Activated T-helper 2 cell treated with anti-CD3 and anti-CD28 coated beads, Interferon-gamma antibody, Interleukin-2, Interleukin-4, amounts not matched to agents 10 μg/mL and 5 μg/mL and 100 μg/mL, durations not matched to agents 14 hours and 24 hours and 36 hours (primary cell): ENCODE measurements at regions of chr7 and their contacts with region 1.

Region 1: GRCh38 chr7:22726345-22727185 is 435 bp upstream of the IL6 start:
- DNase-seq: peak; percentile 56
- H3K4me3 Mint-ChIP-seq: peak overlapping the region; percentile 31
- H3K27ac Mint-ChIP-seq: no peak overlapping the region
- H3K4me1 Mint-ChIP-seq: peaks cover 33% of the 10 kb centered on the region
- H3K27me3 Mint-ChIP-seq: peaks cover 35% of the 10 kb centered on the region

Region 2: DNA sequence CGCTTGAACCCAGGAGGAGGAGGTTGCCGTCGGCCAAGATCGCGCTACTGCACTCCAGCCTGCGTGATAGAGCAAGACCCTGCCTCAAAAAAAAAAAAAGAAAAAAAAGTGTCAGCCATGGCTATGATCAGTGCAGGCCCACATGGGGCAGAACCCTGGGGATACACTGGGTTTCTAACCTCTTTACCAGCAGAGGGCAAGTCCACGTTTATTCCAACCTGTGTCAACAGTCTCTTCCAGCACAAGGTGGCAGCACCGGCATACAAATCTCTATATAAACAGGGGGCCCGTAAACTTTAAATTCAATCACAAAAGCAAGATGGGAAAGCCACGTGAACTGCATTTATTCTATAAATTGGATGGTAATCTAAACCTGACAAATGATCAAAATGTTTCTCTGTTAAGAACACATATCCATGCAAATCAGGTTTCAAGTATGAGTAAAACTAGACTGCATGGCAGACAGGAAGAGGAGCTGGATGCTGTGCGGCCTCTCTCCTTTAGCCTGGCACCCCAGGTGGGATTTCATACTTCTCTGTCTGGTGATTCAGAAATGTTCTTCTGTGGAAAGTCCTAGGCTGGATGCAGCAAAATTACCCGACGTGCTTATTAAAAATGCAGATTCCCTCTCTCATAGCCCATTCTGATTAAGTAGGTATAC is 166.6 kb before region 1 on chr7:
- intact Hi-C with region 1: loop called (anchors 1 kb)
- DNase-seq: peak; percentile 62
- H3K4me3 Mint-ChIP-seq: no peak overlapping the region
- H3K27ac Mint-ChIP-seq: no peak overlapping the region
- H3K4me1 Mint-ChIP-seq: peaks cover 44% of the 10 kb centered on the region
- H3K27me3 Mint-ChIP-seq: peaks cover 18% of the 10 kb centered on the region

Region 3: DNA sequence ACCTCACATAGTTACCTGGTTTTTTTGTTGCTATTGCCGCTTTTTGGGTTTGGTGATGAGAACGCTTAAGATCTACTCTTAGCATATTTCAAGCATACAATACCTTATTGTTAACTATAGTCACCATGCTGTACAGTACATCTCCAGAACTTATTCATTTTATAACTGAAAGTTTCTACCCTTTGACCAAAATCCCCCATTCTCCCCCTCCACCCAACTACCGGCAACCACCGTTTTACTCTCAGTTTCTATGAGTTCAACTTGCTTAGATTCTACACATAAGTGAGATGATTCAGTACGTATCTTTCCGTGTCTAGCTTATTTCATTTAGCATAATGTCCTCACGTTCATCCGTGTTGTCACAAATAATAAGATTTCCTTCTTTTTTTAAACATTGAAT is 86.3 kb before region 1 on chr7:
- intact Hi-C with region 1: loop called (anchors 5 kb)
- DNase-seq: peak; percentile 32
- H3K4me3 Mint-ChIP-seq: no peak overlapping the region
- H3K27ac Mint-ChIP-seq: no peak overlapping the region
- H3K4me1 Mint-ChIP-seq: peaks cover 19% of the 10 kb centered on the region
- H3K27me3 Mint-ChIP-seq: peaks cover 24% of the 10 kb centered on the region

Region 4: GRCh38 chr7:22675917-22676343 is 50.6 kb before region 1 on chr7:
- intact Hi-C with region 1: loop called (anchors 2 kb)
- DNase-seq: peak; percentile 63
- H3K4me3 Mint-ChIP-seq: no peak overlapping the region
- H3K27ac Mint-ChIP-seq: peak overlapping the region; percentile 54
- H3K4me1 Mint-ChIP-seq: peaks cover 84% of the 10 kb centered on the region
- H3K27me3 Mint-ChIP-seq: peaks cover 2% of the 10 kb centered on the region

Region 5: GRCh38 chr7:22697876-22698606 is 28.5 kb before region 1 on chr7:
- intact Hi-C with region 1: loop called (anchors 2 kb)
- DNase-seq: no peak
- H3K4me3 Mint-ChIP-seq: no peak overlapping the region
- H3K27ac Mint-ChIP-seq: peak overlapping the region; percentile 56
- H3K4me1 Mint-ChIP-seq: peaks cover 78% of the 10 kb centered on the region
- H3K27me3 Mint-ChIP-seq: peaks cover 7% of the 10 kb centered on the region

Region 6: GRCh38 chr7:22782616-22783232 is 56.2 kb after region 1 on chr7:
- intact Hi-C with region 1: loop called (anchors 2 kb)
- DNase-seq: peak; percentile 58
- H3K4me3 Mint-ChIP-seq: no peak overlapping the region
- H3K27ac Mint-ChIP-seq: no peak overlapping the region
- H3K4me1 Mint-ChIP-seq: no peaks in the 10 kb centered on the region
- H3K27me3 Mint-ChIP-seq: peaks cover 17% of the 10 kb centered on the region

Region 7: DNA sequence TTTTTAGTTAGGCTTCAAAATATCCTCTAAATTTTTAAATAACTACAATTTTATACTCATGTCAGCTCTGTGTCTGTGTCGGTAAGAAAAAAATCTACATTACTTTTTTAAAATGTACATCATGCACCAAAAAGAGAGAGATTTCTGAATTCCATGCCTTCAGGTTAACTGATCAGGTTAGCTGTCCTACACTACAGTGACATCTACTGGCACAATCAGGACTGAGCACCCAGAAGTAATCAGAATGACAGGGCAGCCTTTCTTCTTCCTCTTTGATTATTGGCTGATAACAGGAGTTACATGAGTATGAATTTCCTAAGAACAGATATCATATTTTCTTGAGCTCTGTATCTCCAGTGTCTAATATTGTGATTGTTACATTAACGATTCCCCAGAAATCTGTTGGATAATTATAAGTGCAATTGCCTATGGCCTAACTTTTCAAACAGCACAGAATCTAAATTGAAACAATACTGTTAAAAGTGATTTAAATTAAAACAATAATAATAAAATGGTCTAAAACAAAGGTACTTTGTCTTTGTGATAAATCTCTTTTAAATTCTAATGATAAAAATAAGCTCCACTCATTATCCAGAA is 329.1 kb after region 1 on chr7:
- intact Hi-C with region 1: loop called (anchors 2 kb)
- DNase-seq: peak; percentile 46
- H3K4me3 Mint-ChIP-seq: no peak overlapping the region
- H3K27ac Mint-ChIP-seq: no peak overlapping the region
- H3K4me1 Mint-ChIP-seq: peaks cover 10% of the 10 kb centered on the region
- H3K27me3 Mint-ChIP-seq: peaks cover 3% of the 10 kb centered on the region